Breast epithelium (tissue), 4 donors: ENCODE measurements at regions of chr6 and their contacts with region 1.

Region 1: GRCh38 chr6:148711833-148712654 is 34.8 kb upstream of the UST start:
- DNase-seq: no peak
- H3K4me3 ChIP-seq: no peak overlapping the region
- H3K27ac ChIP-seq: no peak overlapping the region
- H3K4me1 ChIP-seq: no peaks in the 10 kb centered on the region
- H3K27me3 ChIP-seq: no peaks in the 10 kb centered on the region
- CTCF ChIP-seq: no peak
- POLR2A ChIP-seq: no peak

Region 2: DNA sequence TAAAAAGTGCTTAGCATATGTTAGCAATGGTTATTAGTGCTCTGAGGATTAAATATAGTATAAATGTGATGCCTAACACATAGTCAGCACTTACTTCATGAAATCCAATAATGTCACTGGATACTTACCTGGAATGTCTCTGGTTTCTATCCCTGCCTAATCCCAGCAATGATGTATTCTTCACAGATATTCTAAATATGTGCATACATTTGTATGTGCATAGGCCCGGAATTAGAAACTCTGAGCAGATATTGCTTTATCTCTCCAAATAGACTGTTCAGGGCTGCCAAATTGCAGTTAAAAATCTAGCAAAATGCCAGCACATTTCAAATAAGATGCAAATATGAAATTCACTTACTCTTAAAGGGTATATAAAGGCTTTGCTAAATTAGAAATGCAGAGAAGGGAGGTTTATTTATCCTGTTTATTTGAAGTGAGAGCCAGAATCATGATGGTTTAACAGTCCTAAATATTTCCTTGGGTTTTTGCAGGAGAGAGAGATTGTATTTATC is 1122.2 kb before region 1 on chr6:
- intact Hi-C with region 1: loop called (anchors 5 kb)
- DNase-seq: no peak
- H3K4me3 ChIP-seq: no peak overlapping the region
- H3K27ac ChIP-seq: no peak overlapping the region
- H3K4me1 ChIP-seq: no peaks in the 10 kb centered on the region
- H3K27me3 ChIP-seq: no peaks in the 10 kb centered on the region
- CTCF ChIP-seq: no peak
- POLR2A ChIP-seq: no peak

Region 3: GRCh38 chr6:148682990-148683389 is 29.1 kb before region 1 on chr6:
- intact Hi-C with region 1: loop called (anchors 2 kb)
- DNase-seq: no peak
- H3K4me3 ChIP-seq: no peak overlapping the region
- H3K27ac ChIP-seq: no peak overlapping the region
- H3K4me1 ChIP-seq: no peaks in the 10 kb centered on the region
- H3K27me3 ChIP-seq: no peaks in the 10 kb centered on the region
- CTCF ChIP-seq: no peak
- POLR2A ChIP-seq: no peak